Activated CD8-positive, alpha-beta memory T cell treated with anti-CD3 and anti-CD28 coated beads, Interleukin-2, amount 10 ng/mL, durations not matched to agents 7 days and 5 days (primary cell): ENCODE measurements at regions of chr14 and their contacts with region 1.

Region 1: DNA sequence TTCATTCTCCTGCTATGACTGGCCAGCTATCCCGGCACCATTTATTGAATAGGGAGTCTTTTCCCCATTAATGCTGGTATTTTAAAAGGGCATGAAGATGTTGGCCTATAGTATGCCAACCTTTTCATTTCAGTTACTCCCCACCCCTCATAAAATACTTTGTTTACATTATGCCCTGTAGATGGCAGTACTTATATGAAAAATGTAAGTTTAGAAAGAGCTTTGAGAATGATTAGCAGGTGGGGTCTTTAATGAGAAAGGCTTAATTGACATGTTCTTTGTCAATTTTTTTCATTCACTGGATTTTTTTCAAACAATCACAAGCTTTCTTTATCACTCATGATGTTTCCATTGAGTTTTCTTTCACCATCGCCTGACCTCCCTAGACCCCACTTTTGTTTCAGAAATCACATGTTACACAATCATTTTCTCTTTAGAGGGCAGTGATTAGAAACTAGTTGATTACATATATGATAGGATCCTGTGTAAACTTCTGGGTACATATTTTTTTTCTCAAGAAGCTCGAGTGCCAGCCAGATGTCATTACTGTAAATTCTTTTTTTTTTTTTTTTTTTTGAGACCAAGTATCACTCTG is 62.6 kb upstream of the PSMA6 start:
- DNase-seq: no peak
- ATAC-seq: peak; percentile 57
- H3K4me3 Mint-ChIP-seq: no peak overlapping the region
- H3K27ac Mint-ChIP-seq: peak overlapping the region; percentile 39
- H3K4me1 Mint-ChIP-seq: peaks cover 20% of the 10 kb centered on the region
- H3K27me3 Mint-ChIP-seq: no peaks in the 10 kb centered on the region

Region 2: DNA sequence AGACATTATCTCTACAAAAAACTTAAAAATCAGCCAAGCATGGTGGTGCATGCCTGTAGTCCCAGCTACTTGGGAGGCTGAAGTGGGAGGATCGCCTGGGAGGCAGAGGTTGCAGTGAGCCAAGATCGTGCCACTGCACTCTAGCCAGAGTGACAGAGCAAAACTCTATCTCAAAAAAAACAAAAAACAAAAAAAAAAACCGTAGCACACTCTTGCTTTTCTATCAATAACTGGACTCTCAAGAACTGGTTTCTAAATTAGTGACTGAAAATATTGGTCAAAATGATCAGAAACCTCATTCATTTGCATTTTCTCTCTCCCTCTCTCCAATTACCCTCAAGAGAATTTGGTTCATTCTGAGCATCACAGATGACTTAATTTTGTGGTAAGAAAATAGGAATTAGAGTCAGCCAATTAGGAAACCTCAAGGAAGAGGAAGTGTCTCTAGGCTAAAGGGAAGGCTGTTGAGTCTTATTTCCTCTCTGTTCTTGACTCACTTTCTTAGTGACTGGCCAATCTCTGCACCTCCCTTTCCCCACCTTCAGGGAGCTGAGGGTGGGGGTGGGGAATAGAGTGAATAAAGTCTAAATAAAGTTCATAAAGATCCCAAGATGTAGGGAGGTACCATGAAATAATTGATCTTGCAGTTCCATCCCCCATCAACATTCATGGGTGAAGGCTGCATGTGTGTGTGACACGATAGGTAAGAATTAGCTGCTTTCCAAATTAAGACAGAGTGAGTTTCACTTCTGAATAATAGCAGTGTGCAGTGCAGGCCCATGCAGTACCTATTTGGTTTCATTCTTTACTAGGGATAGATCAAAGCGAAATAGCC is 55.8 kb after region 1 on chr14:
- CTCF ChIA-PET with region 1: interaction called, 13 read pairs
- DNase-seq: peak; percentile 58
- ATAC-seq: peak; percentile 81
- H3K4me3 Mint-ChIP-seq: peak overlapping the region; percentile 57
- H3K27ac Mint-ChIP-seq: peak overlapping the region; percentile 94
- H3K4me1 Mint-ChIP-seq: peaks cover 40% of the 10 kb centered on the region
- H3K27me3 Mint-ChIP-seq: no peaks in the 10 kb centered on the region

Region 3: DNA sequence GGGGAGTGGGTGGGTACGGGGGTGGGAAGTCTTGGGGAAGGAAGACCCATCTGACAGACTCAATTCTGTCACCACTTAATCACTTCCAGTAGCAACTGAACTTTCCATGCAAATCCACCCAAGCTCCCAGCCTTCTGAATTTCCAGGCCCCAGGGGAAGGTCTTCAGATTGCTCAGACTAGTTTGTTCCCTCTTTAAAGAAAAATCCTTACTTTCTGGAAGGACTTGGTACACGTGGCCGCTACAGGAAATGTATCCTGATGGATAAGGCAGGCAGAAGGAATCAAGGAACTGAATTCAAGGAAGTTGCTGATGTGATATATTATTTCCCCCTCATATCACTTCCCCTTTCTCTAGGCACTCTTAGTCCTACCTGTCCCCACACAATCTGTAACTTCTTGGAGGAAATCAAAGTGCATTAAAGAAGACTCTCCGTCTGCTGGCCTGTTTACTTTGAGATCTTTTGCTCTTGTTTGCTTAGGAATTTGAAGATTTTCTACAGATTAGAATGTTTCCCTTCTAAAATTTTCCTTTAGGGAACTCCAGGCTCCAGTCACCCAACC is 168.6 kb after region 1 on chr14:
- CTCF ChIA-PET with region 1: interaction called, 80 read pairs
- DNase-seq: no peak
- ATAC-seq: no peak
- H3K4me3 Mint-ChIP-seq: no peak overlapping the region
- H3K27ac Mint-ChIP-seq: no peak overlapping the region
- H3K4me1 Mint-ChIP-seq: peaks cover 56% of the 10 kb centered on the region
- H3K27me3 Mint-ChIP-seq: no peaks in the 10 kb centered on the region